ENCODE measurements at regions of chr12 and their contacts with region 1.

Region 1: DNA sequence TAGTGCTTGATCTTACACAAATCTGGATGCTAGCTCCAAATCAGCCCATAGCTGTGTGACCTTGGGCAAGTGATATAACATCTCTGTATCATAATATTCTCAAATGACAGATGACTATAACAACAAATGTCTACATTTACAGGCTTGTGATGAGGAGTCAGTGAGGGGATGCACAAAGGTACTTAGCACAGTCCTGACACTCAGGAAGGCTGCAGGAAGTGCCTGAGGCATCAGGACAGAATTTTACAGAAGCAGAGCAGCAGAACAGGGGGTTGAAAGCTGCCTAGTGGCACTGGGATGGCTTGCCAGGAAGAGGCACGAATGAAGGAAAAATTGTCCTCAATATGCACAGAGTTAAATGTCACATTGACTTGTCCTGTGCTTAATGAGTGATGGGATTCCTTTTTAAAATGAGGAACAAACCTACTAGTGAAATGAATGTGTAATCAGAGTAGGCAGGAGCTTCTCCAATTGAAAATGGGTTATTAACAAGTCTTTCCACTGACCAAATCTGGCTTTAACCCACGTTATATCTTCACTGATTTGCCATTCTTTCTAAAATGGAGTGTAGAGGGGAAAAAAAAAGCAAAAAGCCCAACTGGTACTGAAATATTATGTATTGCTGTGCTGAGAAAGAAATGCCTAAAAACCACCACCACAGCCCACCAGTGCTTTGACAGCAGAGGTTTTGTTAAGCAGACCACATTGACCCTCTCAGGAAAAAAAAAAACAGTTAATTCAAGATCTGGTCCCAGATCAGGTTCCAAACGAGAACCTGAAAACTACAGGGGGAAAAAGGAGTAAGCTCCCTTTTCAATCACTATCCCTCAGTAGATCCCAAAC is 11.6 kb downstream of the BTG1 start:
- DNase-seq: no peak
- ATAC-seq: no peak
- H3K4me3 ChIP-seq: no peak overlapping the region
- H3K27ac ChIP-seq: peak overlapping the region; percentile 28 to 45
- H3K4me1 ChIP-seq: peaks cover 4 to 27% of the 10 kb centered on the region in 2 donors
- H3K27me3 ChIP-seq: no peaks in the 10 kb centered on the region

Region 2: GRCh38 chr12:91817512-91817911 is 316.5 kb before region 1 on chr12:
- intact Hi-C with region 1: loop called in 1 of 2 experiments (anchors 2 kb)
- DNase-seq: no peak
- ATAC-seq: peak; percentile 15
- H3K4me3 ChIP-seq: no peak overlapping the region
- H3K27ac ChIP-seq: no peak overlapping the region
- H3K4me1 ChIP-seq: no peaks in the 10 kb centered on the region
- H3K27me3 ChIP-seq: no peaks in the 10 kb centered on the region

Region 3: GRCh38 chr12:92068441-92068840 is 65.6 kb before region 1 on chr12:
- intact Hi-C with region 1: loop called in 1 of 2 experiments (anchors 2 kb)
- DNase-seq: no peak
- ATAC-seq: no peak
- H3K4me3 ChIP-seq: no peak overlapping the region
- H3K27ac ChIP-seq: no peak overlapping the region
- H3K4me1 ChIP-seq: peaks cover 3 to 4% of the 10 kb centered on the region in 2 donors
- H3K27me3 ChIP-seq: no peaks in the 10 kb centered on the region